Caco-2 (cell line): ENCODE measurements at regions of chr1 and their contacts with region 1.

Region 1: DNA sequence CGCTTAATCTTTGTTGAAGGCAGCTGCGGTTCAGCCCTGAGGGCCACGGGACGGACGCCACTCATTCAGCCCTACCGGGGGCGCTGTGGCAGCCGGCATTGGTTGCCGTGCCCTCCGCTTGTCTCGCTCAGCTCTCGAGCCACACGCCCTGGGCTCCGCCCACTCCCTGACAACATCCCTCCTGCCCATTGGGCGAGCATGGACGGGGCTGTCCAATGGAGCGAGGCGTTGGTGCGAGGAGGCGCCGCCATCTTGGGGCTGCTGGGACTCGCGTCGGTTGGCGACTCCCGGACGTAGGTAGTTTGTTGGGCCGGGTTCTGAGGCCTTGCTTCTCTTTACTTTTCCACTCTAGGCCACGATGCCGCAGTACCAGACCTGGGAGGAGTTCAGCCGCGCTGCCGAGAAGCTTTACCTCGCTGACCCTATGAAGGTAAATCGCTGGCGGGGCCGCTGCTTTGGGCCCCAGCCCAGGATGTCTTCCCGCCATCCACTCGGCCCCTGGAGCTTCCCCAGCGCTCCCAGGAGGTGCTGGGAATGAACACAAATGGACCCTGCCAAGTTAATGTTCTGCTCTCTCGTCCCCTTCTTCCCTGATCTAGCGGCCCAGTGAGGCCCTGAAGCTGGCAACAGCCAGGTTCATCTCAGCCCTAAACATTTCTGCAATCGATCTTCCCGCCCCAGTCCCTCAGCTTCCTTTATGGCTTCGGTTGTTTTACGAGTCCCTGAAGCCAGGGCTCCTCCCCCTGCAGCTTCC is at the start of gene SRP9:
- DNase-seq: peak; percentile 99
- H3K4me3 ChIP-seq: peak within 1 kb of the TSS; percentile 94
- H3K4me3 Mint-ChIP-seq: no peak within 1 kb of the TSS
- H3K27ac Mint-ChIP-seq: no peak within 1 kb of the TSS
- H3K4me1 ChIP-seq: peaks cover 2% of the 10 kb centered on the region
- H3K4me1 Mint-ChIP-seq: peaks cover 17% of the 10 kb centered on the region
- H3K27me3 ChIP-seq: no peaks in the 10 kb centered on the region
- H3K27me3 Mint-ChIP-seq: no peaks in the 10 kb centered on the region
- CTCF ChIP-seq: peak; percentile 74 to 93
- total RNA-seq, gene SRP9: 261 and 276 TPM in 2 replicates

Region 2: DNA sequence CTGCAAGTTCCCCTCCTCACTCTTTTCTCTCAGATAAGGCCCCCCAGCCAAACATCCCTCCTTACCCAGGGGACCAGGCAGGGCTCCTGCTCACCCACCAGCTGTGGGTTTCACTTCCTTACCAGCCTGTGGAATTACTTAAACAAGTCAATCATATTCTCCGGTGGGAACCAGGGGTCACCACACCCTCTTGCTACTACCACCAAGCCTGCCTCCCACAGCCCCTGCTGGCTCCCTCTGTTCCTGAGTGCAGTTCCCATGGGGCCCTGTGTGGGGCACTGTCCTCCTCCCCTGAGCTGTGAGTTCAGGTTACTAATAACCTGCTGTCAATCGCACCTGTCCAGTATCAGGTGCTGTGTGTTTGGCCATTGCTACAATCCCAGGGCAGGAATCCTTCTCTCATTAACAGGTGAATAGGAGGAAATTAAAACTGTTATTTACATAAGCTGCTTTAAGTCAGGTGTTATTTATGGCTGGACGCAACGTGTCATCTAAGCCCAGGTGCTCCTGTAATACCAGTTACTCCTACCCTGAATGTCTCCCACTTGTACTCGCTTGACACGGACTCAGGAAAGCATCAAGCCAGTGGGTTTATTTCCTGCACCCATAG is 296.8 kb before region 1 on chr1:
- CTCF ChIA-PET with region 1: interaction called, 10 read pairs
- POLR2A ChIA-PET with region 1: no interaction called
- intact Hi-C with region 1: loop called (anchors 1 kb)
- DNase-seq: peak; percentile 69 to 76
- H3K4me3 ChIP-seq: no peak overlapping the region
- H3K4me3 Mint-ChIP-seq: no peak overlapping the region
- H3K27ac Mint-ChIP-seq: peak overlapping the region; percentile 24
- H3K4me1 ChIP-seq: no peaks in the 10 kb centered on the region
- H3K4me1 Mint-ChIP-seq: peaks cover 8% of the 10 kb centered on the region
- H3K27me3 ChIP-seq: no peaks in the 10 kb centered on the region
- H3K27me3 Mint-ChIP-seq: no peaks in the 10 kb centered on the region
- CTCF ChIP-seq: peak; percentile 75 to 87

Region 3: DNA sequence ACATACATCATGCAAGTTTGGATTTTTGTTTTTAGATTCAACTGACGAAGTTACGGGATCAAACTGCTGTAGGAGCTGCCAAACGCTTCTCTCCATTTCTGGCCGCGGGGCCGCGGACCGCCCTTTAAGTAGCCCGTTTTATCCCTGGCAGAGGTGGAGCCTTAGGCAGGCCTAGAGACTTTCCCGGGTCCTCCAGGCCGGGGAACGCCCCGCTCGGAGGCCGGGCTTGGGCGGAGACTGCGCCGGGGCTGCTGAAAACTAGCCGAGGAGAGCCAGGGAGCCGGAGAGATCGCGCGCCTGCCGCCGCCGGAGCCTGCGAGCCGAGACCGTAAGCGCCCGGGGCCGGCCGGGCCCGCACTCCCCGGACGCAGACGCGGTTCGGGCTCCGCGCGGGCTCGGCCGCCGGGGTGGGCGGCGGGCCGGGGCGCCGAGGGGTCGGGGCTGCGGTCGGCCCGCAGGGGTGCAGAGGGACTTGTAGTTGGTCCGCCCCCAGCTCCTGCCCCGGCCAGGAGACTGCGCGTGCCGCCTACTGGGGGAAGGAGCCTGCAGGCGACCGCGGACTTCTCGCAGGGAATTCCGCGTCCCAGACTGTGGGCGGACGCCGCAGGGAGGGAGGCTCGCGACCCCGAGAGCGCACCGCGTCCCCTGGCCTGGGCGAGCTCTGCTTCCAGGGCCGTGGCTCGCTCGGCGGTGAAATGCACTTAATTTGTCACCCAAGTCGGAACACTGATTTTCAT is 32.2 kb after region 1 on chr1 and contains the start of gene EPHX1:
- CTCF ChIA-PET with region 1: interaction called, 23 read pairs
- POLR2A ChIA-PET with region 1: interaction called, 23 read pairs
- intact Hi-C with region 1: loop called (anchors 1 kb)
- DNase-seq: peak; percentile 89 to 93
- H3K4me3 ChIP-seq: peak within 1 kb of the TSS; percentile 89
- H3K4me3 Mint-ChIP-seq: peak within 1 kb of the TSS; percentile 80
- H3K27ac Mint-ChIP-seq: peak within 1 kb of the TSS; percentile 43
- H3K4me1 ChIP-seq: peaks cover 33% of the 10 kb centered on the region
- H3K4me1 Mint-ChIP-seq: peaks cover 27% of the 10 kb centered on the region
- H3K27me3 ChIP-seq: no peaks in the 10 kb centered on the region
- H3K27me3 Mint-ChIP-seq: no peaks in the 10 kb centered on the region
- CTCF ChIP-seq: peak; percentile 16 to 53
- total RNA-seq, gene EPHX1: 73.7 and 88.5 TPM in 2 replicates

Region 4: DNA sequence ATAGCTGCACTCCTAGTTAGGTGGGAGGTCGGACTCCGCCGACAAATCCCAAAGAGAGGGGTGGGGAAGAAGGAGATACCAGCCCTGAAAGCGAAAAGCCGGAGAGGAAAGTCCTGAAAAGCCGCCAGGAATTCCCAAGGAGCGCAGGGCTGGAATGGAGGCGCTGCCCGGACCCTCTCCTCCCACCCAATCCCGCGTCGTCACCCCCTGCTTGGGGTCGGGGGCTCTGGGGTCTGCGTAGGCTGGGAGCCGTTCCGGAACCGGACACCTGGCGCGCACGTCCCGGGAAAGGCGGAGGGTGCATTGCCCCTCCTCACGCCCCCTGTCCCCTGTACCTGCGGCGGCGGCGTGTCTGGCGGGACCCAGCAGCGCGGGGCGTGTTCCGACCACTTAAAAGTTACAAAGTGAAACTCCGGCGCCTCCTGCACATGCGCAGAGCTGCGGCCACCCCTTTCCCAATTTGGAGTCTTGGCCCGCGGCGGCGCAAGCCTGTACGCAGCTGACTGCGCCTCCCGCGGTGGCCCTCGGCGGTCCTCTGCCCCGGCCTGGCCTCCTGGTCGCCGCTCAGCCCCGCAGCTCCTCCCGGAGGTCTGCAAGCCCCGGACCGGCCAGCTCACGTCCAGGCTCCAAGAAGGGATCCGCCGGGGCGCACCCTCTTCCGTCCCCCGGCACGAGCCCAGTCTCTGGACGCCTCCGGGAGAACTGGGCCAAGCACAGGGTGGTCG is 104.4 kb after region 1 on chr1 and contains the start of gene TMEM63A:
- CTCF ChIA-PET with region 1: interaction called, 13 read pairs
- POLR2A ChIA-PET with region 1: interaction called, 11 read pairs
- intact Hi-C with region 1: no loop called
- DNase-seq: peak; percentile 92 to 95
- H3K4me3 ChIP-seq: peak within 1 kb of the TSS; percentile 91
- H3K4me3 Mint-ChIP-seq: peak within 1 kb of the TSS; percentile 95
- H3K27ac Mint-ChIP-seq: peak within 1 kb of the TSS; percentile 91
- H3K4me1 ChIP-seq: peaks cover 29% of the 10 kb centered on the region
- H3K4me1 Mint-ChIP-seq: peaks cover 24% of the 10 kb centered on the region
- H3K27me3 ChIP-seq: no peaks in the 10 kb centered on the region
- H3K27me3 Mint-ChIP-seq: no peaks in the 10 kb centered on the region
- CTCF ChIP-seq: peak in 1 of 2 experiments; percentile 30
- total RNA-seq, gene TMEM63A: 93.9 and 116 TPM in 2 replicates

Region 5: DNA sequence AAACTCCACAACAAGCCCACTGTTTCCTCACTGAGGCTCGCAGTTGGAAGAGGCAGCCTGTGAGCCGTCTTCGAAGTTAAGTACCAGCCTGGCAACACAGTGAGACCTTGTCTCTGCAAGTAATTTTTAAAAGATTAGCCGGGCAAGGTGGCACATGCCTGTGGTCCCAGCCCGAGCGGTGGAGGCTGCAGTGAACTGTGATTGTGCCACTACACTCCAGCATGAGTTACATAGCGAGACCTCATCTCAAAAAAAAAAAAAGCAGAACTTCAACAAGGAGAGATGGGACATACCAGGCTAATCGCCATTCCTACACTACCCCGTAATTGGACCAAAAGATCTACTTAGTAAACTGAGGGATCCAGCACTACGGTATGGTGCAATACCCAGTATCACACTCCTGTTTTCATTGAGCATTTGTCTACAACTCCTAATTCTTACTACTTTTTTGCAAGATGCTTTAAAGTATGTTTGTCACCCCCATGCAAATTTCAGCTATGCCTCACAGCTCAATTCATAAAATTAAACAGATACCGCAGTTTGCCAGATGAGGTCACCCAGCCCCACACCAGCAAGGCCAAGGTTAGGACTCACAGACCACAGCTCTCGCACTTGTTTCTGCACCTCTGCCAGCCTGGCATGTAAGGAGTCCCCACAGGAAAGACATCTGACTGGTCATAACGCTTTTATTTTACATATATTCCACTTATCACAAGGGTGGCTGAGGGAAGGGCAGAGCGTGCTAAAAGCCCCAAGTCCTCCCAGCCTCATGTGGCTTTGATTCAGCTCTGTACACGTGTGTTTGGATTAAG is 200.4 kb after region 1 on chr1:
- CTCF ChIA-PET with region 1: no interaction called
- POLR2A ChIA-PET with region 1: no interaction called
- intact Hi-C with region 1: loop called (anchors 1 kb)
- DNase-seq: no peak
- H3K4me3 ChIP-seq: no peak overlapping the region
- H3K4me3 Mint-ChIP-seq: no peak overlapping the region
- H3K27ac Mint-ChIP-seq: no peak overlapping the region
- H3K4me1 ChIP-seq: no peaks in the 10 kb centered on the region
- H3K4me1 Mint-ChIP-seq: no peaks in the 10 kb centered on the region
- H3K27me3 ChIP-seq: no peaks in the 10 kb centered on the region
- H3K27me3 Mint-ChIP-seq: no peaks in the 10 kb centered on the region
- CTCF ChIP-seq: no peak